Naive thymus-derived CD4-positive, alpha-beta T cell (primary cell): ENCODE measurements at regions of chr5 and their contacts with region 1.

Region 1: GRCh38 chr5:14727428-14727865 is 62.9 kb downstream of the OTULIN start:
- DNase-seq: peak; percentile 47 to 79 (median 69)
- ATAC-seq: peak; percentile 77
- H3K4me3 ChIP-seq: no peak overlapping the region
- H3K4me3 Mint-ChIP-seq: no peak overlapping the region
- H3K27ac ChIP-seq: no peak overlapping the region
- H3K27ac Mint-ChIP-seq: peak overlapping the region in 5 of 9 donors; percentile 5 to 49 (median 42)
- H3K4me1 ChIP-seq: peaks cover 0 to 4% of the 10 kb centered on the region in 2 donors
- H3K4me1 Mint-ChIP-seq: peaks cover 8 to 22% (median 16%) of the 10 kb centered on the region in 7 donors
- H3K27me3 ChIP-seq: no peaks in the 10 kb centered on the region
- H3K27me3 Mint-ChIP-seq: no peaks in the 10 kb centered on the region

Region 2: GRCh38 chr5:14706615-14707021 is 20.8 kb before region 1 on chr5:
- CTCF ChIA-PET with region 1: interaction called, 20 read pairs
- POLR2A ChIA-PET with region 1: interaction called, 60 read pairs
- intact Hi-C with region 1: loop called in 1 of 2 experiments (anchors 1 kb)
- DNase-seq: peak in 8 of 9 donors; percentile 33 to 88 (median 84)
- ATAC-seq: peak; percentile 96
- H3K4me3 ChIP-seq: peak overlapping the region; percentile 4
- H3K4me3 Mint-ChIP-seq: peak overlapping the region; percentile 74 to 94 (median 86)
- H3K27ac ChIP-seq: peak overlapping the region; percentile 72
- H3K27ac Mint-ChIP-seq: peak overlapping the region; percentile 96 to 100 (median 99)
- H3K4me1 ChIP-seq: peaks cover 34 to 75% of the 10 kb centered on the region in 2 donors
- H3K4me1 Mint-ChIP-seq: peaks cover 50 to 96% (median 86%) of the 10 kb centered on the region in 7 donors
- H3K27me3 ChIP-seq: no peaks in the 10 kb centered on the region
- H3K27me3 Mint-ChIP-seq: no peaks in the 10 kb centered on the region

Region 3: GRCh38 chr5:14895301-14895700 is 167.9 kb after region 1 on chr5:
- CTCF ChIA-PET with region 1: no interaction called
- POLR2A ChIA-PET with region 1: no interaction called
- intact Hi-C with region 1: loop called in 1 of 2 experiments (anchors 1 kb)
- DNase-seq: peak in 1 of 9 donors; percentile 19
- ATAC-seq: no peak
- H3K4me3 ChIP-seq: no peak overlapping the region
- H3K4me3 Mint-ChIP-seq: no peak overlapping the region
- H3K27ac ChIP-seq: no peak overlapping the region
- H3K27ac Mint-ChIP-seq: no peak overlapping the region
- H3K4me1 ChIP-seq: no peaks in the 10 kb centered on the region
- H3K4me1 Mint-ChIP-seq: no peaks in the 10 kb centered on the region
- H3K27me3 ChIP-seq: no peaks in the 10 kb centered on the region
- H3K27me3 Mint-ChIP-seq: no peaks in the 10 kb centered on the region

Region 4: DNA sequence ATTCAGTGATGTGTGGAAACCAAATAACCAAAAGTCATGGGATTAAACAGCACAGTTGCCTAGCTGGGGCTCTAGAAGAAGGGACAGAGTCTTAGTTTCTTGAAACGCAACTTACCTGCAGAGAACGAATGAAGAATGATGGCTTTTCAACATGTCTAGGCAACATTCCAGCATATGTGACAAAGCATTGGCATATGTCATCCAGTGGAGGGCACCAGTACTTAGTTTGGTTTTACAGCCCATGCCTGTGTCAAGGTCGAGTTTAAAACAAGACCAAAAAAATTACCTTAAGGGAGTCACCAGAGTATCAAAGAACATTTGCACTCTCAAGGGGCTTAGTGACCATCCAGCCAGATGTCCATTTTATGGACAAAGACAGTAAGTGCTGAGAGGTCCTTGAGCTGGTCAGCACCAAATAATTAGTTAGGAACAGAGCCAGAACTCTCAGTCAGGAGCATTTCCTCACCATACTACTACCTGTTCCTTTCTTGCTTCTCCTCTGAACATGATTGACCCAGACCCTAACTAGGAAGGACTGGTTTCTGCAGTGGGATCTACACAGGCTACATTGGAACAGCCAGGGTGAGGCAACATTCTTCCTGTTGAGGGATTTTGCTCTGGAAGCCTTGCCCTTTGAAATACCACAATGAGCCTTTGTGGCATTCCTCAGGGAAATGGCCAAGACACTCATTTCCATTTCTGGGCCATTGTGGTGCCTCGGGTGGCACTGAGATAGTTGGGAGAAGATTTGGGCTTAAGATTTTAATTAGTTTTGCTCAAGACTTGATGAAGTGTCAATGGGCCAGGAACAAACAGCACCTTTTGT is 219.6 kb after region 1 on chr5:
- CTCF ChIA-PET with region 1: interaction called, 7 read pairs
- POLR2A ChIA-PET with region 1: interaction called, 3 read pairs
- intact Hi-C with region 1: loop called (anchors 1 kb)
- DNase-seq: peak in 7 of 9 donors; percentile 34 to 66 (median 56)
- ATAC-seq: peak; percentile 92
- H3K4me3 ChIP-seq: no peak overlapping the region
- H3K4me3 Mint-ChIP-seq: no peak overlapping the region
- H3K27ac ChIP-seq: no peak overlapping the region
- H3K27ac Mint-ChIP-seq: no peak overlapping the region
- H3K4me1 ChIP-seq: no peaks in the 10 kb centered on the region
- H3K4me1 Mint-ChIP-seq: peaks cover 0 to 9% (median 5%) of the 10 kb centered on the region in 7 donors
- H3K27me3 ChIP-seq: no peaks in the 10 kb centered on the region
- H3K27me3 Mint-ChIP-seq: peaks cover 0 to 5% (median 4%) of the 10 kb centered on the region in 5 donors

Region 5: GRCh38 chr5:15003511-15003920 is 276.1 kb after region 1 on chr5:
- CTCF ChIA-PET with region 1: interaction called, 26 read pairs
- POLR2A ChIA-PET with region 1: interaction called, 3 read pairs
- intact Hi-C with region 1: loop called (anchors 1 kb)
- DNase-seq: peak; percentile 10 to 77 (median 69)
- ATAC-seq: peak; percentile 96
- H3K4me3 ChIP-seq: no peak overlapping the region
- H3K4me3 Mint-ChIP-seq: no peak overlapping the region
- H3K27ac ChIP-seq: no peak overlapping the region
- H3K27ac Mint-ChIP-seq: peak overlapping the region in 1 of 9 donors; percentile 33
- H3K4me1 ChIP-seq: no peaks in the 10 kb centered on the region
- H3K4me1 Mint-ChIP-seq: peaks cover 0 to 20% (median 0%) of the 10 kb centered on the region in 7 donors
- H3K27me3 ChIP-seq: peaks cover 0 to 3% of the 10 kb centered on the region in 2 donors
- H3K27me3 Mint-ChIP-seq: peaks cover 0 to 38% (median 0%) of the 10 kb centered on the region in 5 donors